GM12878 (cell line): ENCODE measurements at regions of chr13 and their contacts with region 1.

Region 1: GRCh38 chr13:79360095-79360494 is 46.0 kb downstream of the RBM26 start:
- DNase-seq: no peak
- ATAC-seq: peak; percentile 76
- H3K4me3 ChIP-seq: no peak overlapping the region
- H3K27ac ChIP-seq: no peak overlapping the region
- H3K4me1 ChIP-seq: no peaks in the 10 kb centered on the region; the same call in 1 of the 2 replicates
- H3K27me3 ChIP-seq: no peaks in the 10 kb centered on the region
- CTCF ChIP-seq: no peak
- EP300 ChIP-seq: no peak
- POLR2A ChIP-seq: no peak
- RAD21 ChIP-seq: no peak

Region 2: GRCh38 chr13:79018166-79018565 is 341.9 kb before region 1 on chr13:
- CTCF ChIA-PET with region 1: no interaction called
- POLR2A ChIA-PET with region 1: no interaction called
- RAD21 ChIA-PET with region 1: no interaction called
- SMC1A ChIA-PET with region 1: no interaction called
- in situ Hi-C with region 1: no loop called
- intact Hi-C with region 1: no loop called
- DNase-seq: no peak
- ATAC-seq: no peak
- H3K4me3 ChIP-seq: no peak overlapping the region
- H3K27ac ChIP-seq: no peak overlapping the region
- H3K4me1 ChIP-seq: no peaks in the 10 kb centered on the region
- H3K27me3 ChIP-seq: no peaks in the 10 kb centered on the region
- CTCF ChIP-seq: no peak
- EP300 ChIP-seq: no peak
- POLR2A ChIP-seq: no peak
- RAD21 ChIP-seq: no peak

Region 3: DNA sequence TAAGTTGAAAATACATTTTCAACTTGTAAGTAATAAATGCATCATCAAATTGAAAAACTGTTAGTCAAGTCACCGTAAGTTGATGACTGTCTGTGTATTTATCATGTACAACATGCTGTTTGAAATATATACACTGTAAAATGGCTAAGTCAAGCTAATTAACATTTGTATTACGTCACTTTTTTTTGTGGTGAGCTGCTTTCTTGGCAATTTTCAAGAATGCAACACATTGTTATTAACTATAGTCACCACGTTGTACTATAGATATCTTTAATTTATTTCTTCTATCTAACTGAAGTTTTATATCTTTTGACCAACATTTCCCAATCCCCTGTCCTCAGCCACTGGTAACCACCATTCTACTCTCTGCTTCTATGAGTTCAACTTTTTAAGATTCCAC is 11.1 kb before region 1 on chr13:
- CTCF ChIA-PET with region 1: interaction called, 4 read pairs
- POLR2A ChIA-PET with region 1: interaction called, 3 read pairs
- RAD21 ChIA-PET with region 1: interaction called, 4 read pairs
- SMC1A ChIA-PET with region 1: interaction called, 14 read pairs
- in situ Hi-C with region 1: no loop called
- intact Hi-C with region 1: no loop called
- DNase-seq: no peak
- ATAC-seq: no peak
- H3K4me3 ChIP-seq: no peak overlapping the region
- H3K27ac ChIP-seq: no peak overlapping the region
- H3K4me1 ChIP-seq: no peaks in the 10 kb centered on the region
- H3K27me3 ChIP-seq: no peaks in the 10 kb centered on the region
- CTCF ChIP-seq: no peak
- EP300 ChIP-seq: no peak
- POLR2A ChIP-seq: no peak
- RAD21 ChIP-seq: no peak